Activated naive CD4-positive, alpha-beta T cell treated with anti-CD3 and anti-CD28 coated beads for 36 hours (primary cell): ENCODE measurements at regions of chr9 and their contacts with region 1.

Region 1: DNA sequence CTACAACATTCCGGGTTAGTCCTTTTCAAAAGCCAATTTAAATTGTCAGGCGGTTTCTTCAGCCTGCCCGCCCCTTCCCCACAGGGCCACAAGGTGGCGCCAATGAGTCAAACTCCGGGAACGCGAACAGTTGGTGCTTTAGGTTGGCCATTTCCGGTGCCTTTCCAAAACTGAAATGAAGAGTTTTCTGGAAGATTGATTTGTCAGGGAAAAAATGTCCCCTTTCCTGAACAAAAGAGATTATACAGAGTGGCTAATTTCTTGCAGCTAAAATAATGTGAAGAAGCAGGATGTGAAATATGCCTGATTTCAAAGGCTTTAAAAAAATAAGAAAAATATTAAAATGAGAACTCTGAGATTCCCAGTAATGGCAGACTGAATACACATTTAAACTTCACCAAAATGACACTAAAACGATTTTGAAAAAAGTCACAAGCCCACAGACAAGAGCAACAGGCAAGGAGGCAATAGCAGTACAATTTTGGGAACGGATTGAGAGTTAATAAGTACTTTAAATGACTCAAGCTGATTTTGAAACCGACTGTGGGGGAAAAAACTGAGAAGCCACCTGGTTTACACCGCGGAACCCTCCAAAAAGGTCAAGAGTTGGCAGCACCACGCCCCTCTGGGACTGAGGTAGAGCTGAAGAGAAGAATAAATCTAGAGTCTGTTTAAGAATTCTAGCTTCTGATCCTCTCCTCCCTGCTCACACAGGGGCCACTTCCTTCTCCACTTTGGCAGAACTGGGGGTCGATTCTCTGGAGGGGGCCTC is 45.7 kb downstream of the SLC46A2 start:
- DNase-seq: peak; percentile 86
- H3K4me3 Mint-ChIP-seq: no peak overlapping the region
- H3K27ac Mint-ChIP-seq: no peak overlapping the region
- H3K4me1 Mint-ChIP-seq: peaks cover 8% of the 10 kb centered on the region
- H3K27me3 Mint-ChIP-seq: no peaks in the 10 kb centered on the region

Region 2: GRCh38 chr9:112764344-112764743 is 80.6 kb before region 1 on chr9:
- CTCF ChIA-PET with region 1: no interaction called
- intact Hi-C with region 1: no loop called
- DNase-seq: no peak
- H3K4me3 Mint-ChIP-seq: no peak overlapping the region
- H3K27ac Mint-ChIP-seq: no peak overlapping the region
- H3K4me1 Mint-ChIP-seq: peaks cover 6% of the 10 kb centered on the region
- H3K27me3 Mint-ChIP-seq: no peaks in the 10 kb centered on the region

Region 3: GRCh38 chr9:112856808-112857207 is 11.9 kb after region 1 on chr9:
- CTCF ChIA-PET with region 1: interaction called, 12 read pairs
- intact Hi-C with region 1: no loop called
- DNase-seq: no peak
- H3K4me3 Mint-ChIP-seq: no peak overlapping the region
- H3K27ac Mint-ChIP-seq: no peak overlapping the region
- H3K4me1 Mint-ChIP-seq: no peaks in the 10 kb centered on the region
- H3K27me3 Mint-ChIP-seq: no peaks in the 10 kb centered on the region

Region 4: GRCh38 chr9:112861638-112862555 is 16.9 kb after region 1 on chr9:
- CTCF ChIA-PET with region 1: interaction called, 12 read pairs
- intact Hi-C with region 1: loop called (anchors 1 kb)
- DNase-seq: no peak
- H3K4me3 Mint-ChIP-seq: no peak overlapping the region
- H3K27ac Mint-ChIP-seq: no peak overlapping the region
- H3K4me1 Mint-ChIP-seq: peaks cover 18% of the 10 kb centered on the region
- H3K27me3 Mint-ChIP-seq: no peaks in the 10 kb centered on the region

Region 5: DNA sequence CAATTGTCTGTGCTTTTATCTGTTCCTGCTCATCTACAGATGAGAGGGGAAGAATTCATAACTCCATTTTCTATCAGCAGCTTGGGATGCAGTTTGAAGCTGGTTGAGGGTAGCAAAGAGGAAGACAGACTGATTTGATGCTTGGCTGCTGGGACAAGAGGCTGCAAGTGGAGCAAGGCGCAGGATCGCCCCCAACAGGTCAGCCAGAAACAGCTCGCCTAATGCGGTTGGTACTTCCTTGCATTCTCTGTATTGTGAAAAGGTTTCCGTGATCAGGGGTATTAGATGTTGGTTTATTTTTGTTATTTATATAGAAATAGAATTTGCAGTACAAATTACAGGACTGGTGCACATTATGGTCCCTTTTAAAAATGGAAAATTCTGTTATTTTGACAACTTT is 126.5 kb after region 1 on chr9:
- CTCF ChIA-PET with region 1: no interaction called
- intact Hi-C with region 1: loop called (anchors 1 kb)
- DNase-seq: peak; percentile 42
- H3K4me3 Mint-ChIP-seq: no peak overlapping the region
- H3K27ac Mint-ChIP-seq: no peak overlapping the region
- H3K4me1 Mint-ChIP-seq: no peaks in the 10 kb centered on the region
- H3K27me3 Mint-ChIP-seq: peaks cover 20% of the 10 kb centered on the region